ENCODE measurements at regions of chr6 and their contacts with region 1.

Region 1: DNA sequence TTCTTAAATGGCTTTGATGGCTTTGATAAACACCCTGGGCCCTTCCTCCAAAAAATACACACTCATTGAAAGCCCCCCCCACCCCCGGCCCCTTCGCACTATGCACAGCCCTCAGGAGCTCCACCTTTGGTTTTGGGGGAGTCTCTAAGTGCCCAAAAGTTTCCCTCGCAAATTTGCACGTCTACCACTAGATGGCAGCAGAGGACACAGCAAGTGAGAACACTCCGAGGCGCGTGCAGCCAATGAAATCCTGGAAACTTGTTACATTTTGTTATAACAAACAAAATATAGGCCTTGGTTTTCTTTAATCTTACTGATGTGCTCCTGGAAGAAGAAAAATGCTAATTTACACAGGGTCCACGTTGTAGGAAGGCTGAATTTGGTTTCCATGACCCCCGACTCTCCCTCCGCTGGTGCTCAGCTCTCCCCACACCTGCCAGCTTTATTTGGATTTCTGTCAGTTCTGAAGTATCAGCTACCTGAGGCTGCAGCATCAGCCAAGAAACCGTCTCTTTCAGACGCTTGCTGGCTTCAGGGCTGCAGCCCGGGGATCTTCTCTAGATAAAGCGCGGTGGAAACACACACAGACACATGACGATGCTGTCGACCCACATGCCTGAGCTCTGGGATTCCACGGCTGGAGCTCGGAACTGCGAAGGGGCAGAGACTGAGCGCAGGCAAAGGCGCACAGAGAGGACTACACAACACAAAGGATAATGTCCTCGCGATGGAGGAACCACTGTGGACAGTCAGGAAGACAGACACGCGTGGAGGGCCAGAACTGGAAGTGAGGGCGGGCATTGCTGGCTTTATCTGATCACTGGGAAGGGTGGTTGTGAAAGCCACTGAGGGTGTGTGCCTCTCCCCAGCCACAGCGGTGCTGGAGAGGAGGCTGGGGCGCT is 148.4 kb upstream of the RPS6KA2 start:
- DNase-seq: peak; percentile 48
- H3K4me3 ChIP-seq: no peak overlapping the region
- H3K27ac ChIP-seq: no peak overlapping the region
- H3K4me1 ChIP-seq: no peaks in the 10 kb centered on the region
- H3K27me3 ChIP-seq: no peaks in the 10 kb centered on the region
- CTCF ChIP-seq: peak; percentile 79 to 81
- POLR2A ChIP-seq: no peak

Region 2: DNA sequence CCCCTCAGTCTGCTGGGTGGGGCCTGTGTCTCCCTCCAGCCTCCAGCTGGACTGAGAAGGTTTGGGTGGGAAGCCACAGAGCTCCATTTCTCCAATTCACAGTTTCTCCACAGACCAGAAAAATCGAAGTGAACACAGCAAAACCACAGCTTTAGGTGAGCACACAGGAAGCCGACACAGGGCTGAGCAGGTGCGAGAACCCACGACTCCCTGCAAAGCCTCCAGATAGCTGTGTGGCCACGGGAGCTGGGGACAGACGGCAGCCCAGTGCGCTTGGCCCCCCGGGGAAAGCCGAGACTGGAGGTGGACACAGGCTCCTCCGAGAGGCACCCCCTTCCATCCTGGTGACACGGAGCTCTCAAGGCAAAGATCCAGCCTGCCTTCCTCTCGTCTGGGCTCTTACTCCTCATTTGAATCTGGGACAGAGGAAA is 363.7 kb before region 1 on chr6:
- CTCF ChIA-PET with region 1: no interaction called
- POLR2A ChIA-PET with region 1: no interaction called
- dilution Hi-C with region 1: no loop called
- intact Hi-C with region 1: no loop called
- DNase-seq: no peak
- H3K4me3 ChIP-seq: no peak overlapping the region
- H3K27ac ChIP-seq: no peak overlapping the region
- H3K4me1 ChIP-seq: no peaks in the 10 kb centered on the region
- H3K27me3 ChIP-seq: no peaks in the 10 kb centered on the region
- CTCF ChIP-seq: no peak
- POLR2A ChIP-seq: no peak

Region 3: DNA sequence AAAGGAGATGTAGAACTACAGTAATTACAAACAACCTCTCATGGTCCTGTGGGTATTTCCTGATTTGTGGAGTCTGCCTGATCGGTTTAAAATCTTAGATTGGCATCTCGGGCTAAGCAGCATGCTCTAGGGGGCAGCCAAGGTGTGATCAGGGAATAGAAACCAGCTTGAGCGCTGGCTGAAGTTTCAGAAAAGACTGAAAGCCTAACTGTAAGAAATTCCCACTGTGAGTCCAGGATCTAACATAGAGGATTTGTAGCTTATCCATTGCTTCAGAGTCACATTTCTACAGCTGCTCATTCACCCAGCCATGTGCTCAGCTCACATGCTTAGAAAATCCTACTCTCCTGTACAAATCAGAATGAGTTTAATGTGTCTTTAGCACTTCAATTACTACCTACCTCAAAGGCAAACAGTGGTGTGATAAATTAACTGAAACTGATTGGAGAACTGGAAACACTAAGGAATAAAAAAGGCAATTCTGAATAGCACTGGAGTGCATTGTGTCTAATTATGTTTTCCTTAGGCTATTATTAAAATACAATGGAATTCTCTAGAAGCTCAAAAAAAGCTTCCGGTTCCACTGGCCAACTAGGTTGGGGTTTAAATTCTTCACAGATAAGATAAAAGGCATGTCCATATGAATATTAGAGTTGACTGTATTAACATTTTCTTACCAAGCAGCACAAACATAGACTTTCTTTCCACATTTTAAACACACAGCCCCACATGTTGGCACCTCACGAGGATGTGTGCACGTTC is 318.9 kb before region 1 on chr6:
- CTCF ChIA-PET with region 1: interaction called, 4 read pairs
- POLR2A ChIA-PET with region 1: no interaction called
- dilution Hi-C with region 1: no loop called
- intact Hi-C with region 1: loop called (anchors 5 kb)
- DNase-seq: peak; percentile 68
- H3K4me3 ChIP-seq: no peak overlapping the region
- H3K27ac ChIP-seq: no peak overlapping the region
- H3K4me1 ChIP-seq: peaks cover 13% of the 10 kb centered on the region
- H3K27me3 ChIP-seq: no peaks in the 10 kb centered on the region
- CTCF ChIP-seq: peak; percentile 24 to 34
- POLR2A ChIP-seq: no peak

Region 4: DNA sequence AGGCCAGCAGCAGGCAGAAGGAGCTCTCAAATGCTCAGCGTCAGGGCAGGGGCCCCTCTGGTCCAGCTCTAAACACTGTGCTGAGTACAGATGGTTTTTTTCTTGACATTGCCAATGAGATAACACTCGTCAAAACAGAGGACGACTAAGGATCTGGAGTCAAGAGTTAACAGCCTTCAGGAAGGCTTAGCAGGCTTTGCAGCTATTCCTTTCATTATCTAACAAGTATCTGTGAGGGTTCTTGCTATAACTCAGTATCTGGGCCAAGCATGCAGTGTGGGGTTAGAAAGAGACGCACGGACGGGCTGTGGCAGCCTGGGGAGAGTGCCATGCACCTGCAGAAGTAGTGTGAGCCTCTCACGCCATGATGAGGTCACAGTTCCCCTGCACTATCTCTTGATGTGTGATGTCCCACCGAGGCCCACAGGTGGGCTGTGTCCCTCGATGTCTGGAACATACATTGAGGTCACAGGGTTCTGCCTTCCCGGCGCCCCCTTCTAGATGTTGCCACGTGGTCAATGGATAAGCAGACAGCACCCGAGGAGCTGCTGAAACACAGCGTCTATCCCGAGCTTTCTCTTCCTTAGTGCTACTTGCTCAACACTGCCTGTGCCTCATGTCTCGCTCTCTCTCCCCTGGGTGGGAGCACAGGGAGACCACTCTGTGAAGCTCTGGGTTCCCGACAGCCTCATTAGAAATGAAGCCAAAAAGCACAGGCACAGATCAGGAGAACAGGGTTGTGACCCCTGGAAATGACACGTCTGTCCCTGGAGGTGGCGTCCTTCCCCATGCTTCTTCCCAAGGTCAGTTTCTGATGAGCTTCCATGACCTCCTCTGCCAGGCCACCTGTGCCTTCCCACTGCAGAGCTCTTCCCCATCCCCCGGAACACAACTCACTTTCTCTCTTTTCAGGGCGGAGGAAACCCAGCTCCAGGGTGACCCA is 62.9 kb before region 1 on chr6:
- CTCF ChIA-PET with region 1: interaction called, 10 read pairs
- POLR2A ChIA-PET with region 1: no interaction called
- dilution Hi-C with region 1: no loop called
- intact Hi-C with region 1: loop called (anchors 2 kb)
- DNase-seq: no peak
- H3K4me3 ChIP-seq: no peak overlapping the region
- H3K27ac ChIP-seq: no peak overlapping the region
- H3K4me1 ChIP-seq: peaks cover 2% of the 10 kb centered on the region
- H3K27me3 ChIP-seq: no peaks in the 10 kb centered on the region
- CTCF ChIP-seq: no peak
- POLR2A ChIP-seq: no peak

Region 5: GRCh38 chr6:166950443-166950821 is 175.0 kb after region 1 on chr6:
- CTCF ChIA-PET with region 1: interaction called, 14 read pairs
- POLR2A ChIA-PET with region 1: no interaction called
- dilution Hi-C with region 1: no loop called
- intact Hi-C with region 1: loop called (anchors 1 kb)
- DNase-seq: no peak
- H3K4me3 ChIP-seq: no peak overlapping the region
- H3K27ac ChIP-seq: no peak overlapping the region
- H3K4me1 ChIP-seq: peaks cover 2% of the 10 kb centered on the region
- H3K27me3 ChIP-seq: no peaks in the 10 kb centered on the region
- CTCF ChIP-seq: no peak
- POLR2A ChIP-seq: no peak

Region 6: DNA sequence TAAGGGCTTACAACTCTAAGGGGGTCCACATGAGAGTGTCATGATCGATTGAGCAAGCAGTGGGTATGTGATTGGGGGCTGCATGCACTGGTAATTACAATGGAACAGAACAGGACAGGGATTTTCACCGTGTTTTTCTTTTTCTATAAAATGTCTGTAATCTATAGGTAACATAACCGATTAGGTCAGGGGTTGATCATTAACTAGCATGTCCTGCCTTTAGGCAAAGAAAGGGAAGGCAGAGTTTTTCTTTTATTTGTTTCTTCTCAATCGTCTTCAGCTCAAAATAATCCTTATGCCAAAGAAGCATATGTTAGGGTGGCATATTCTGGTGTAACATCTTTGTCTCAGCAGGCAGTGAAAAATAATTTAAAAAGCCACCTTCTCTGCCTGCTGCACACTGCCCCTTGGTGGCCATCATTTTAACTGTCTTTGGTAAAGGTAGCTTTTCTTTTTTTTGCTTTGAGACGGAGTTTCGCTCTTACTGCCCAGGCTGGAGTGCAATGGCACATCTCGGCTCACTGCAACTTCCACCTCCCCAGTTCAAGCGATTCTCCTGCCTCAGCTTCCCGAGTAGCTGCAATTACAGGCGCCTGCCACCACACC is 214.1 kb after region 1 on chr6:
- CTCF ChIA-PET with region 1: interaction called, 40 read pairs
- POLR2A ChIA-PET with region 1: no interaction called
- dilution Hi-C with region 1: no loop called
- intact Hi-C with region 1: loop called (anchors 1 kb)
- DNase-seq: peak; percentile 38
- H3K4me3 ChIP-seq: no peak overlapping the region
- H3K27ac ChIP-seq: no peak overlapping the region
- H3K4me1 ChIP-seq: no peaks in the 10 kb centered on the region
- H3K27me3 ChIP-seq: no peaks in the 10 kb centered on the region
- CTCF ChIP-seq: peak; percentile 24 to 34
- POLR2A ChIP-seq: no peak

Region 7: GRCh38 chr6:167113935-167114910 is 338.8 kb after region 1 on chr6:
- CTCF ChIA-PET with region 1: no interaction called
- POLR2A ChIA-PET with region 1: no interaction called
- dilution Hi-C with region 1: no loop called
- intact Hi-C with region 1: no loop called
- DNase-seq: no peak
- H3K4me3 ChIP-seq: no peak overlapping the region
- H3K27ac ChIP-seq: no peak overlapping the region
- H3K4me1 ChIP-seq: no peaks in the 10 kb centered on the region
- H3K27me3 ChIP-seq: no peaks in the 10 kb centered on the region
- CTCF ChIP-seq: no peak
- POLR2A ChIP-seq: no peak

Region 8: GRCh38 chr6:167212713-167213005 is 437.2 kb after region 1 on chr6:
- CTCF ChIA-PET with region 1: no interaction called
- POLR2A ChIA-PET with region 1: no interaction called
- dilution Hi-C with region 1: no loop called
- intact Hi-C with region 1: no loop called
- DNase-seq: no peak
- H3K4me3 ChIP-seq: no peak overlapping the region
- H3K27ac ChIP-seq: no peak overlapping the region
- H3K4me1 ChIP-seq: no peaks in the 10 kb centered on the region
- H3K27me3 ChIP-seq: no peaks in the 10 kb centered on the region
- CTCF ChIP-seq: no peak
- POLR2A ChIP-seq: no peak

Region 9: DNA sequence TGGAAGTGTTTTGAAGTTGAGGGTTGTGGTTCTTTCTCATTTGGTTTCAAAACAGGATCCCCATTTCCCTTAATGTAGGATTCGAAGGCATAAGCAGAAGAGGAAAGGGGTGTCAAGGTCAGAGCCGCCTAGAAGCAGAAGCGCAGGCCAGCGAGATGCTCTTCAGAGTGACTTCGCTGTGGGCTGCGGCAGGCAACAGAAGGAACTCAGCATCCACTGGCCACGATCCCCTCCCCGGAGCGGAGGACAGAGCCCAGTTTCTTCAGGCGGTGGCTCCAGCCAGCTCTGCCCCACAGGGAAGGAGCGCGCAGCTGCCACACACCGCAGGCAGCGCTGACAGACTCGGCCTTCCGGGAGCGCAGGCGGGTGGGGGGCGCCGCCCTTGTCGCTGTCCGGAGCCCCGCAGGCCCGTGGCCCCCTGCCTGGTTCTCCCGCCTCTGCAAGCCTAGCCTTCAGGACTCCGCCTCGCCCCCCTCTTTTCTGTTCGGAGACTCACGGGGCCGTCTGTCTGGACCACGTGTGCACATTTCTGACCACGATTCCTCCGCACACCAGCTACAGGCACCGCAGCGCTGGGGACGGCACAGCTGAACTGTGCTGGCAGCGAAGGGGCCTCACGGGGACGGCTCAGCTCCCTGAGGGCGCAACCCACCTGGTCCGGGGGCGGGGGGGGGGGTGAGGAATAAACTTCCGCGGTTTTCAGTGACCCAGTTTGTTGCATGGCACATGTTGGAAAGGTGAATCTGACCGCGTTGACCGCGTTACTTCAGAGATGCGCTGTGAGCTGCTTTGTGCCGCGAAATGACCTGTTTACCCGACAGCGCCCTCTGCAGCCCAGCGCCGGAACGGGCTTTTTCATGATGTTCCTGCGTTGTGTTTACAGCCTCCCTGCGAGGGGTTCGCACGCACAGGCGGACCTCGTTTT is 575.6 kb after region 1 on chr6:
- CTCF ChIA-PET with region 1: interaction called, 10 read pairs
- POLR2A ChIA-PET with region 1: no interaction called
- dilution Hi-C with region 1: no loop called
- intact Hi-C with region 1: no loop called
- DNase-seq: peak; percentile 76
- H3K4me3 ChIP-seq: peak overlapping the region in 2 of 3 experiments; percentile 23 to 33
- H3K27ac ChIP-seq: no peak overlapping the region
- H3K4me1 ChIP-seq: peaks cover 6% of the 10 kb centered on the region
- H3K27me3 ChIP-seq: peaks cover 0 to 5% of the 10 kb centered on the region in 2 experiments
- CTCF ChIP-seq: peak; percentile 83 to 86
- POLR2A ChIP-seq: no peak

Measured in endothelial cell of umbilical vein (primary cell).